PC-3 (cell line): ENCODE measurements at regions of chr15 and their contacts with region 1.

Region 1: GRCh38 chr15:36682101-36682500 is 102.7 kb downstream of the CDIN1 start:
- DNase-seq: peak; percentile 6
- ATAC-seq: no peak
- H3K4me3 ChIP-seq: no peak overlapping the region
- H3K27ac ChIP-seq: no peak overlapping the region
- H3K4me1 ChIP-seq: no peaks in the 10 kb centered on the region
- H3K27me3 ChIP-seq: no peaks in the 10 kb centered on the region
- CTCF ChIP-seq: no peak

Region 2: GRCh38 chr15:36557364-36557763 is 124.7 kb before region 1 on chr15:
- CTCF ChIA-PET with region 1: no interaction called
- POLR2A ChIA-PET with region 1: no interaction called
- intact Hi-C with region 1: no loop called
- DNase-seq: no peak
- ATAC-seq: no peak
- H3K4me3 ChIP-seq: no peak overlapping the region
- H3K27ac ChIP-seq: no peak overlapping the region
- H3K4me1 ChIP-seq: no peaks in the 10 kb centered on the region
- H3K27me3 ChIP-seq: no peaks in the 10 kb centered on the region
- CTCF ChIP-seq: no peak

Region 3: DNA sequence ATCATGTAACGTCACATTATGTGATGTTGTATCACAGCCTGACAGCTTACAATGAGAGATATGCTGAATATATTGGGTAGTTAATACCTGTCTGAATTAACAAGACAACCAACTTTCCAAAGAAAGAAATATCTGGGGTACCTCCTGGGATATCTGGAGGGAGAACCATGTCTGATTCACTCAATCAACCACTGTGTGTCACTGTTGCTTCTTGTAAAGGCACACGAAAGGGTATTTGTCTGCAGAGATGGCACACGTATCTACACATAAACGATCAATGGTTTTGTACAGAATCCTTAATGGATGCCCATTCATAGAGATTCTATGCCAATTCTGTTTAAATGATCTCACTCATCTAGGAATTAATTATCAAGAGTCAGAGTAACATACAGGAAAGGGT is 1000.2 kb after region 1 on chr15:
- CTCF ChIA-PET with region 1: no interaction called
- POLR2A ChIA-PET with region 1: interaction called, 13 read pairs
- intact Hi-C with region 1: no loop called
- DNase-seq: peak; percentile 58
- ATAC-seq: no peak
- H3K4me3 ChIP-seq: no peak overlapping the region
- H3K27ac ChIP-seq: no peak overlapping the region
- H3K4me1 ChIP-seq: no peaks in the 10 kb centered on the region
- H3K27me3 ChIP-seq: peaks cover 27% of the 10 kb centered on the region
- CTCF ChIP-seq: peak; percentile 70